Cardiac septum (tissue), 1 donor: ENCODE measurements at regions of chr11 and their contacts with region 1.

Region 1: DNA sequence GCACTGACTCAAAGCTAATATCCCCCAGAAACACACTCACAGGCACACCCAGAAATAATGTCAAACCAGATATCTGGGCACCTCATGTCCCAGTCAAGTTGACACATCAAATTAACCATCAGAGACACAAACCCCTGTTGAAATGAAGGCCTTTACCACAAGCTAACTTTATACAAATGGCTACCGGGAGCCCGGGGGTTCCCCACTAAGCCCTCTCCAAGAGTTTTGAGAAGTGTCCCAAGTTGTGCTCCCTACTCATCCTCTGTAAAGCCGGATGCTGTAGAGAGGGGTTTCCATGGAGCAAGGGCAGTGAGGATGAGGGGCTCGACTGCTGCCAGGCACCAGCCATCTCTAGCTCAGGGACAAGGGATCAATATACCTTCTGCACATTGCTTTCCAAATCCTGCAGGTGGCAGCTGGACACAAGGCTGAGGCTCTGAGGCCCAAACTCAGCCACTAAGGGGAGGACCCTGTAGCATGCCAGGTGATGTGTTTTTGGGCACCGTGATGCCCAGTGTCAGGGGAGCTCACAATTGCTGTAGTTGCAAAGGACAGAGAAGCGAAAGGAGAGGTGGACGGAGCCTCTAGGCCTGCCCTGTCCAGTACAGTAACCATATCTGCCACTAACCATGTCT is 145.7 kb downstream of the TTC17 start:
- DNase-seq: no peak

Region 2: DNA sequence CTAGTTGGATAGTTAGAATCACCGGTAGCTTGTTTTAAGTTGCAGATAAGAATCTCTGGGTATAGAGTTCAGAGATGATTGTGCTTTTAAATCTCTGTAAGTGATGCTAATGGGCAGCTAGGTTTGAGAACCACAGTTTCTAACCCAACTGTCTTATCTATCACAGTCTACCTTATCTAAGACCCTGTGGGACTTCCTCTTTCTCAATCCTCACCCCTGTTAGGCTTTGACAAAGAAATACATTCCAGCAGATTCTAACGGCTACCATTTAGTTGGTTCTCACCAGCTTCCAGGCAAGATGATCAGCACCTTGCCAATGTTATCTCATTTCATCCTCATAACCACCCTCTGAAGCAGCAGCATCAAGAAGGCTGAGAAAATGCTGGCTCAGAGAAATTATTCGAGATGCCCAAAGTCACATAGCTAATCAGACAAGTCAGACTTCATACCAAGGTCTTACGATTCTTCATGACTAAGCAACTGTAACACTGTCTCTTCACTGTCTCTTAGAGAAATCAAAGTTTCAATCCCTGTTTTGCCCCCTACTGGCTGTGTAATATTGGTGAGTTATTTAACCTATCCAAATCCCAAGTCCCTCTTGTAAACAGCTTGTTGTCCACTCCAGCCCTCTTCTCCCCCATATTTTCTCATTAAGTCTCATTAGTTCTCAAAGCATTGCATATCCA is 385.0 kb before region 1 on chr11:
- intact Hi-C with region 1: no loop called
- DNase-seq: no peak

Region 3: GRCh38 chr11:43579171-43579918 is 74.9 kb after region 1 on chr11:
- intact Hi-C with region 1: no loop called
- DNase-seq: no peak

Region 4: DNA sequence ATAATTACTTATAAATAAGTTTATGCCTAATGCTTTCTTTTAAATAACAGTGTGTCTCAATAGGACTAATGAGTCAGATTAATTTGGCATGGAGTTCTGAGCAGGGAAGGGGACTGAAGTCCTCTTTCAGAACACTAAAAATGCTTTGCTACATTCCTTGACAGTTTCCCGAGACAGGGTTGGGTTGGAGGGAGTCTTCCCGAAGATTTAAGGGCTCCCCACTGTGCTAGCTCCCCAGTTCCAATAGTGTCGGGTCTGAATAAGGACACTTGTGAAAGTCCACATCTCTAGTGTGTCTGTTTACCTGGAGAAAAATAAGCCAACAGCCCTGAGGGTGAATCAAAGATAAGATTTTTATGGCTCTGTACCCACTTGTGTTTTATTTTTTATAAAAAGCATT is 134.3 kb after region 1 on chr11:
- intact Hi-C with region 1: no loop called
- DNase-seq: no peak

Region 5: GRCh38 chr11:43852057-43852636 is 347.7 kb after region 1 on chr11:
- intact Hi-C with region 1: loop called (anchors 5 kb)
- DNase-seq: no peak

Region 6: GRCh38 chr11:44036811-44037657 is 532.6 kb after region 1 on chr11:
- intact Hi-C with region 1: loop called (anchors 10 kb)
- DNase-seq: peak; percentile 87